ENCODE measurements at regions of chr2 and their contacts with region 1.

Region 1: GRCh38 chr2:64036034-64036705 is 16.9 kb upstream of the VPS54 start:
- DNase-seq: peak; percentile 64
- CTCF ChIP-seq: no peak

Region 2: GRCh38 chr2:64021641-64022042 is 14.5 kb before region 1 on chr2:
- CTCF ChIA-PET with region 1: interaction called, 26 read pairs
- POLR2A ChIA-PET with region 1: no interaction called
- DNase-seq: no peak
- CTCF ChIP-seq: no peak

Region 3: DNA sequence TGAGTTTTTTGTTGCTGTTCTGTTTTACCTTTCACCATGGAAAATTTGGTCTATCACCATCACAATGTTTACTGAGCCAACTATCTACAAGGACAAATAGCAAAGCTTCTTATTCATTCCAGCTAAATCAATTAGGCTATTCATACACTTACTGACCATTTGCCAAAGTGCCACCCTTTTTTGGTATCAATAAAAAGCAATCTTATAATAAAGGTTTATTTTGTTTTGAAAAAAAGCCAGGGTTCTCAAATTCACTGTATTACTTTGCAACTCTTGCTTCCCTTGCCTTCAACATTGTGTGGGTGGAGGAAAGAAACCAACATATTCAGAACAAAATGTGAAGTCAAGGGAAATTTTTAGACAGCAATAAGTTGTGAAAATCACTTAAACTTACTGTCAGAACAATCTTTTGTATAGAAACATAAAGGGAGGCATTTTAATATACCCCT is 92.8 kb after region 1 on chr2:
- CTCF ChIA-PET with region 1: no interaction called
- POLR2A ChIA-PET with region 1: no interaction called
- DNase-seq: peak; percentile 22
- CTCF ChIP-seq: no peak

Region 4: GRCh38 chr2:64383016-64383591 is 346.9 kb after region 1 on chr2:
- CTCF ChIA-PET with region 1: no interaction called
- POLR2A ChIA-PET with region 1: no interaction called
- DNase-seq: no peak
- CTCF ChIP-seq: no peak

Measured in GM10248 (cell line).